ENCODE measurements at regions of chr11 and their contacts with region 1.

Region 1: DNA sequence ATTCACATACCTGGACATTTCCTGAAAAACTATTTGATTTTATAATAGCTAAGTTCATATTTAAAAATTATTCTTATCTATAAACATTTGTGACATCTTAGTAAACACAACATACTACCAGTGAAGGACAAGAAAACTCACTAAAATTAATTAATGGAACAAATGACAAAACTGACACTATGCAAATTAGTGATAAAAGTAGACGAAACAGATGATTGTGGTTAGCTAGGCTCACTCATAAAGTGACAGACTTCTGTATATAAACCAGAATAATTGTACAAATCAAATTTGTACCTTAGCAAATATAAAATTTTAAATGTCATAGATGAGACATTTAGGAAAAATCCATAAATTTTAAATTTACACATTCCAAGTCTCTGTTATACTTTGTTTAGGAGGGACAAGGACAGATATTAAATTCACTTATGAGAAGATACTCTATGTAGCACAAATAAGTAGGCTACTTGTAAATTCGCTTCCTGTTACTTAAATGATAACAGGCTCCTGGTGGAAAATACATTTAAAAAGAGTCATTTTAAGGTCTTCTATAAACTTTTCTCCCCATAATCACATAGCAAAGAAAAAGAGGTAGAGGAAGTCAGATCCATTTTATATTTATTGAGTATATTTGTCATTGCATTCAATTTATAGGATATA is 81.2 kb downstream of the KIF18A start:
- DNase-seq: no peak
- H3K4me3 ChIP-seq: no peak overlapping the region
- H3K27ac ChIP-seq: no peak overlapping the region
- H3K4me1 ChIP-seq: no peaks in the 10 kb centered on the region
- H3K27me3 ChIP-seq: no peaks in the 10 kb centered on the region
- CTCF ChIP-seq: no peak
- POLR2A ChIP-seq: no peak

Region 2: GRCh38 chr11:28049338-28050216 is 22.8 kb after region 1 on chr11:
- intact Hi-C with region 1: loop called (anchors 2 kb)
- DNase-seq: no peak
- H3K4me3 ChIP-seq: no peak overlapping the region
- H3K27ac ChIP-seq: no peak overlapping the region
- H3K4me1 ChIP-seq: no peaks in the 10 kb centered on the region
- H3K27me3 ChIP-seq: no peaks in the 10 kb centered on the region
- CTCF ChIP-seq: no peak
- POLR2A ChIP-seq: no peak